ENCODE measurements at regions of chr1 and their contacts with region 1.

Region 1: GRCh38 chr1:152577168-152577567 is 3.1 kb downstream of the LCE3D start:
- DNase-seq: no peak
- H3K4me3 ChIP-seq: no peak overlapping the region
- H3K27ac ChIP-seq: no peak overlapping the region
- H3K4me1 ChIP-seq: no peaks in the 10 kb centered on the region
- H3K27me3 ChIP-seq: no peaks in the 10 kb centered on the region
- CTCF ChIP-seq: no peak
- POLR2A ChIP-seq: no peak

Region 2: DNA sequence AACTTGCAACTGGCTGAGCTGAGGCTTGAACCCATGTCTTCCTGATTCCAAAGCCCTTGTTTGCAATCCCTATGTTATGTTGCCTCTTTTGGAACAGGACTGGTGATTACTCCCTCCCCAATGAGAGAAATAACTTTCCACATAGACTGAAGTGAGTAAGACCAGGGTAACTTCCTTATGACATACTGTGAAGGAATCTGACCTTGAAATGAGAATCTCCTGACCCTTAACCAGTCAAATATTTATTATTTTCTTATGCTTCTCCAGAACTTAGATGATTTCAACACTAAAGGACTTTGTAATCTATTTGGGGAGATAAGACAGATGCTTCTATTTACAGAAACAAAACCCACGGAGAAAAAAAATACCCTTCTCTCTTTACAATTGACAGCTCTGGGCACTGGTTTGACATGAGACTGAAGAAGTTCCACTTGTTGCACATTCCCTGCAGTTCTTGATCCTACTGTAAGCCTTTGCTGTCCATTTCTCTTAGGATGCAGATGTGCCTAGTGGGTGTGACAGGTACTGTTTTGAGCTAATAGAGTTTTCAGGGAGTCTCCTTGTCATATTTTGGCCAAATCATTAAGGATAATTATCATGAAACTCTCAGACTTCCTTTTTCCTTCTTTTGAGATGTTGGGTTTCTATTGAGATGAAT is 414.2 kb before region 1 on chr1:
- intact Hi-C with region 1: no loop called
- DNase-seq: no peak
- H3K4me3 ChIP-seq: no peak overlapping the region
- H3K27ac ChIP-seq: no peak overlapping the region
- H3K4me1 ChIP-seq: no peaks in the 10 kb centered on the region
- H3K27me3 ChIP-seq: no peaks in the 10 kb centered on the region
- CTCF ChIP-seq: no peak
- POLR2A ChIP-seq: no peak

Region 3: GRCh38 chr1:152623203-152623844 is 46.2 kb after region 1 on chr1:
- intact Hi-C with region 1: loop called (anchors 5 kb)
- DNase-seq: no peak
- H3K4me3 ChIP-seq: no peak overlapping the region
- H3K27ac ChIP-seq: no peak overlapping the region
- H3K4me1 ChIP-seq: no peaks in the 10 kb centered on the region
- H3K27me3 ChIP-seq: no peaks in the 10 kb centered on the region
- CTCF ChIP-seq: no peak
- POLR2A ChIP-seq: no peak